Panc1 (cell line): ENCODE measurements at regions of chr17 and their contacts with region 1.

Region 1: DNA sequence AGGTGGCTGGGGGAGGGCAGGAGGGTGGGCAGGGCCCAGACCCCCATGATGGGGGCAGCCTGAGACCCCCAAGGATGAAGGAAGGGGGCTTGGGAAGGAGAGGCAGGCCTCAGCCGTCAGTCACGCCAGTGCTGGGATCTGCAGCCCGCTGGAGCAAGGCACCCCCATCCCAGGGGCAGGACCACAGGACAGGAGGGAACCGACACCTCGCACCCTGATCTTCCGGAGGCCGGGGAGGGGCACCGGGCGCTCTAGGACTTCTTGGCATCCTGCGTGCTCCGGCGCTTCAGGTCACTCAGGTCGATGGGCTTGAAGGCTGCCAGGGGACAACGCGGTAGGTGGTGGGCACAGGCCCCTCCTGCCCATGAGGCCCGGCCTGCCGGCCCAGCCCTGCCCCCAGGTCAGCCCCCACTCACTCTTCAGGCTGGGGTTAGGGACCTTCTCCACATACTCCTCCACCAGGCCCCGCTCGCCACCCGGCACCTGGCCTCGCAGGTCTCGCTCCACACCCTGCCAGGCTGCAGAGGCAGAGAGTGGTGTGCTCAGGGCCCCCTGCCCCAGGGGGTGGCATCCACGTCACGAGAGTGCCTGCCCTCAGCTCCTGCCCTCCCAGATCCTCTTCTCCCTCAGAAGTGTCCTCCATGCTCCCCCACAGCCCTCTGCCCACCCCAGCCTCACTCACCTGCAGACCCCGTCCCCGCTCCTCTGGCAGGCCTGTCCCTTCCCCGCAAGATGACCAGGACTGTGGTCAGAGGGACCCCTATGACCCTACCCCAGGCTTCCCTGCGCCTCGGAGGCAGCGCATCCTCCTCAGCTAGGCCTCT is 9.9 kb downstream of the MCRIP1 start:
- DNase-seq: no peak
- ATAC-seq: no peak
- H3K4me3 ChIP-seq: no peak overlapping the region
- H3K27ac ChIP-seq: no peak overlapping the region
- H3K4me1 ChIP-seq: peaks cover 18% of the 10 kb centered on the region
- H3K27me3 ChIP-seq: no peaks in the 10 kb centered on the region
- CTCF ChIP-seq: no peak

Region 2: GRCh38 chr17:81722184-81723120 is 100.8 kb before region 1 on chr17:
- CTCF ChIA-PET with region 1: interaction called, 16 read pairs
- POLR2A ChIA-PET with region 1: no interaction called
- in situ Hi-C with region 1: no loop called
- intact Hi-C with region 1: no loop called
- DNase-seq: no peak
- ATAC-seq: peak; percentile 46
- H3K4me3 ChIP-seq: no peak overlapping the region
- H3K27ac ChIP-seq: no peak overlapping the region
- H3K4me1 ChIP-seq: peaks cover 13% of the 10 kb centered on the region
- H3K27me3 ChIP-seq: no peaks in the 10 kb centered on the region
- CTCF ChIP-seq: no peak

Region 3: DNA sequence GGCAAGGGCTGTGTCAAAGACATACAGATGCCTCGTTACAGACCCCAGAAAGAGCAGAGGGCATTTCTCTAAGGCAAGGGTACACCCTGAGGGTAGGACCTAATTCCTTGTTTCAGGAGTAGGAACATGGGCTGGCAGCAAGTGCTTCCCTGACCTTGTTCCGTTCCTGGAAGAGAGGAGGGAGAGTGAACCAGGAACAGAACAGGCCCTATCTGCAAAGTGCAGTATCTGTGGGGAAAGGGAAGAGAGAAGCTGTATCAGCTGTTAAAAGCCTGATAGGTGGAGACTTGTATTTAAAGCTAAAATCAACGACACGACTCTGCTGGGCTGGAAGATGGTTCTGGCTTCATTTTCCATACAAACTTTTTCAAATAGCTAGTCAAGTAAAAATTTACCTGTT is 300.9 kb after region 1 on chr17:
- CTCF ChIA-PET with region 1: interaction called, 10 read pairs
- POLR2A ChIA-PET with region 1: no interaction called
- in situ Hi-C with region 1: no loop called
- intact Hi-C with region 1: no loop called
- DNase-seq: no peak
- ATAC-seq: no peak
- H3K4me3 ChIP-seq: no peak overlapping the region
- H3K27ac ChIP-seq: no peak overlapping the region
- H3K4me1 ChIP-seq: no peaks in the 10 kb centered on the region
- H3K27me3 ChIP-seq: no peaks in the 10 kb centered on the region
- CTCF ChIP-seq: no peak